ENCODE measurements at regions of chr11 and their contacts with region 1.

Region 1: DNA sequence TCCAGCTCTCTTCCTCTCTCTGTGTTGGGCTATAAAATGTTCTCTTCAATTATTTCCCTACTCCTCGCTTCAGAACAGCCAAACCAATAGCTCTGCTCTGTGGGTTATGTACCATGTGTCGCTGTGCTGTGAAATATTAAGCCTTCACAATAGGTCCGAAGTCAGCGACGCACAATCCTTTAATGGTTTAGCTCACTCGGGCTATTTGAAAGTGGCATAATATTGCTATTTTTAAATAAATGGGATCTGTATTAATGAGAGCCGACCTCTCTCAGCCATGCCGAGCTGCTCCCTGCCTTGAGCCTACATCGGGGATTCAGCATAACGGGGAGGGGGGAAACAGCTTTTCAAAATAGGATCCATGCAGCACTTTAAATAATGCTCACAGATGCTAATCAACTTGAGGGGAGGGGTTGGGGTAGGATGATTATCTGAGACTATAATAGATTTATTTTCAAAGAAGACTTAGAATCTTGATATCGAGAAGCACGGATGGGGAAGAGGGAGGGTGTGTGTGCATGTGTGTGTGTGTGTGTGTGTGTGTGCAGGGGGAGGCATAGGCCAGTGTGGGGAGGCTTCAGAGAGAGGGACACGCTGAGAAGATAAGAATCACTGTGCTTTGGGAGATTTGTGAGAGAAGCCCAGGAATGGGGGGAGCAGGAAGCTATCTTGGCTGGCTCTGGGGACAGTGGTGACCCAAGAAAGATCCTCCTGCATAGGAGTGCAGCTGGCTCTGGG is 271.5 kb downstream of the NXPE2 start:
- DNase-seq: no peak

Region 2: DNA sequence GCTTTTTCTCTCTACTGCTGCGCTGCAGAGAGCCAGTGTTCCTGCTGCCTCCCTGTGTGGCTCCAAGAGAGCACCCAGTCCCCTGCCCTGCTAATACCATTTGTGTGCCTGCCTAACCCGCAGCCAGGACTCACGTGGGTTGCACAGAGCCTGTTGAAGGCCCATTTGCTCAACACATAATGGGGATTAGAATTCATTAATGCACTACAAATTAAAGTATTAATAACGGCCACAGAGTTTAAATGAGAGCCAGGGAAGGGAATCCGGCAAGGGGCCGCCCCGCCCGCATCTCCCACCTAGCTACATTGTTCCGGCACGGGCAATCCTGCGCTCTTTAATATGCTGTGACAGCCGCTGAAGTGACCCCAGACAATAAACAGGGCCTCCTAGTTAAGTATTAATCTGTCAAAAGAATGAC is 60.2 kb before region 1 on chr11:
- intact Hi-C with region 1: loop called in 1 of 2 experiments (anchors 5 kb)
- DNase-seq: no peak

Region 3: GRCh38 chr11:115051938-115052590 is 102.3 kb after region 1 on chr11:
- intact Hi-C with region 1: no loop called
- DNase-seq: no peak

Region 4: GRCh38 chr11:115544422-115544948 is 594.7 kb after region 1 on chr11:
- intact Hi-C with region 1: loop called in 1 of 2 experiments (anchors 5 kb)
- DNase-seq: no peak

Region 5: GRCh38 chr11:116615211-116615865 is 1665.6 kb after region 1 on chr11:
- intact Hi-C with region 1: loop called in 1 of 2 experiments (anchors 5 kb)
- DNase-seq: no peak

Measured in posterior vena cava (tissue), 2 donors.